ENCODE measurements at regions of chr3 and their contacts with region 1.

Region 1: GRCh38 chr3:86774082-86774691 is 216.8 kb downstream of the VGLL3 start:
- DNase-seq: peak; percentile 63
- H3K4me3 ChIP-seq: no peak overlapping the region
- H3K27ac ChIP-seq: no peak overlapping the region
- H3K4me1 ChIP-seq: no peaks in the 10 kb centered on the region
- H3K27me3 ChIP-seq: no peaks in the 10 kb centered on the region
- CTCF ChIP-seq: peak; percentile 68

Region 2: GRCh38 chr3:86594838-86595237 is 179.3 kb before region 1 on chr3:
- CTCF ChIA-PET with region 1: no interaction called
- POLR2A ChIA-PET with region 1: no interaction called
- intact Hi-C with region 1: no loop called
- DNase-seq: no peak
- H3K4me3 ChIP-seq: no peak overlapping the region
- H3K27ac ChIP-seq: no peak overlapping the region
- H3K4me1 ChIP-seq: no peaks in the 10 kb centered on the region
- H3K27me3 ChIP-seq: no peaks in the 10 kb centered on the region
- CTCF ChIP-seq: no peak

Region 3: DNA sequence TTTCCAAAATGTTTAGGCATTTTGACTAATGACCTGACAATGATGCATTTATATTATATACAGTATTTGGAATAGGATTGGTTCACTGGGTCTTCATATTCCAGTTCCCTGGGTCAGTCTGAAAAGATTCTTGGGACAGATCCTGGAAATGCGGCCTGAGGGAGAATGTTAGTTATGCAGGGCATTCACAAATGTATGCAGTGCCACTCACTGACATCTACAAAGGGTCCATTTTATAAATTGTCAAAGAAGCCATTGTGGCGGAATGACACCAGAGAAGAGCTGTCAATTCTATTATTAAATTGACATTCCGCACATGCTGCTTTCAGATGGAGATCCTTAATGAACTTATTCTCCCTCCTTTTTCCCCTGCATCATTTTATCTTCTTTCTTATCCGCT is 40.1 kb after region 1 on chr3:
- CTCF ChIA-PET with region 1: no interaction called
- POLR2A ChIA-PET with region 1: no interaction called
- intact Hi-C with region 1: no loop called
- DNase-seq: no peak
- H3K4me3 ChIP-seq: no peak overlapping the region
- H3K27ac ChIP-seq: no peak overlapping the region
- H3K4me1 ChIP-seq: no peaks in the 10 kb centered on the region
- H3K27me3 ChIP-seq: no peaks in the 10 kb centered on the region
- CTCF ChIP-seq: no peak

Region 4: GRCh38 chr3:86969500-86970189 is 195.5 kb after region 1 on chr3:
- CTCF ChIA-PET with region 1: no interaction called
- POLR2A ChIA-PET with region 1: no interaction called
- intact Hi-C with region 1: no loop called
- DNase-seq: peak; percentile 83
- H3K4me3 ChIP-seq: no peak overlapping the region
- H3K27ac ChIP-seq: no peak overlapping the region
- H3K4me1 ChIP-seq: peaks cover 15% of the 10 kb centered on the region
- H3K27me3 ChIP-seq: no peaks in the 10 kb centered on the region
- CTCF ChIP-seq: peak; percentile 93

Region 5: GRCh38 chr3:87082796-87083440 is 308.7 kb after region 1 on chr3:
- CTCF ChIA-PET with region 1: interaction called, 3 read pairs
- POLR2A ChIA-PET with region 1: no interaction called
- intact Hi-C with region 1: loop called (anchors 2 kb)
- DNase-seq: peak; percentile 75
- H3K4me3 ChIP-seq: no peak overlapping the region
- H3K27ac ChIP-seq: no peak overlapping the region
- H3K4me1 ChIP-seq: no peaks in the 10 kb centered on the region
- H3K27me3 ChIP-seq: no peaks in the 10 kb centered on the region
- CTCF ChIP-seq: peak; percentile 73

Measured in A673 (cell line).